Activated CD4-positive, alpha-beta T cell treated with anti-CD3 and anti-CD28 coated beads, Interleukin-2, amount 10 ng/mL, durations not matched to agents 24 days and 14 days (primary cell): ENCODE measurements at regions of chr20 and their contacts with region 1.

Region 1: GRCh38 chr20:2688041-2688591 is 4.5 kb upstream of the EBF4 start:
- DNase-seq: peak; percentile 95
- H3K4me3 Mint-ChIP-seq: peak overlapping the region; percentile 56
- H3K27ac Mint-ChIP-seq: peak overlapping the region; percentile 78
- H3K4me1 Mint-ChIP-seq: peaks cover 29% of the 10 kb centered on the region
- H3K27me3 Mint-ChIP-seq: peaks cover 32% of the 10 kb centered on the region

Region 2: GRCh38 chr20:2643708-2644107 is 44.4 kb before region 1 on chr20:
- intact Hi-C with region 1: no loop called
- DNase-seq: no peak
- H3K4me3 Mint-ChIP-seq: no peak overlapping the region
- H3K27ac Mint-ChIP-seq: no peak overlapping the region
- H3K4me1 Mint-ChIP-seq: peaks cover 3% of the 10 kb centered on the region
- H3K27me3 Mint-ChIP-seq: no peaks in the 10 kb centered on the region

Region 3: GRCh38 chr20:2742934-2743559 is 54.9 kb after region 1 on chr20:
- intact Hi-C with region 1: loop called (anchors 1 kb)
- DNase-seq: peak; percentile 92
- H3K4me3 Mint-ChIP-seq: peak overlapping the region; percentile 66
- H3K27ac Mint-ChIP-seq: peak overlapping the region; percentile 79
- H3K4me1 Mint-ChIP-seq: peaks cover 31% of the 10 kb centered on the region
- H3K27me3 Mint-ChIP-seq: peaks cover 19% of the 10 kb centered on the region

Region 4: GRCh38 chr20:2752567-2753460 is 64.7 kb after region 1 on chr20:
- intact Hi-C with region 1: loop called (anchors 1 kb)
- DNase-seq: peak; percentile 83
- H3K4me3 Mint-ChIP-seq: peak overlapping the region; percentile 79
- H3K27ac Mint-ChIP-seq: no peak overlapping the region
- H3K4me1 Mint-ChIP-seq: peaks cover 23% of the 10 kb centered on the region
- H3K27me3 Mint-ChIP-seq: peaks cover 52% of the 10 kb centered on the region

Region 5: DNA sequence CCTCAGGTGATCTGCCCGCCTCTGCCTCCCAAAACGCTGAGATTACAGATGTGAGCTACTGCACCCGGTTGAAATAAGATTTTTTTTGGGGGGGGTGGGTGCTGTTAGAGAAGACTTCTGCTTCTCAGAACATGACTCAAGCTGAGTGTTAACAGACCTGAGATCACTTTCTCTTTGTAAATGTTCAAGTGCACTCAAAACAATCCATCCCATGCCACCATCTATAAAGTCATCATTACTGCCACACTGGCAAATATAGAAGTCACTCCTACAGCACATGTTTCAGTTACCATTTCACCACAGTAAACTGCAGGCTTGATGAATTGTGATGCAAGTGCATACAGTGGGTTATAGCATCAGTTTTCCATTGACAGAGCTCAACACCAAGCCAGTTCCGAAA is 161.4 kb after region 1 on chr20:
- intact Hi-C with region 1: loop called (anchors 2 kb)
- DNase-seq: no peak
- H3K4me3 Mint-ChIP-seq: no peak overlapping the region
- H3K27ac Mint-ChIP-seq: no peak overlapping the region
- H3K4me1 Mint-ChIP-seq: peaks cover 24% of the 10 kb centered on the region
- H3K27me3 Mint-ChIP-seq: no peaks in the 10 kb centered on the region

Region 6: GRCh38 chr20:2984956-2985661 is 297.0 kb after region 1 on chr20:
- intact Hi-C with region 1: loop called (anchors 10 kb)
- DNase-seq: no peak
- H3K4me3 Mint-ChIP-seq: no peak overlapping the region
- H3K27ac Mint-ChIP-seq: no peak overlapping the region
- H3K4me1 Mint-ChIP-seq: peaks cover 37% of the 10 kb centered on the region
- H3K27me3 Mint-ChIP-seq: no peaks in the 10 kb centered on the region

Region 7: GRCh38 chr20:3000852-3001523 is 312.9 kb after region 1 on chr20:
- intact Hi-C with region 1: loop called (anchors 5 kb)
- DNase-seq: peak; percentile 75
- H3K4me3 Mint-ChIP-seq: no peak overlapping the region
- H3K27ac Mint-ChIP-seq: no peak overlapping the region
- H3K4me1 Mint-ChIP-seq: no peaks in the 10 kb centered on the region
- H3K27me3 Mint-ChIP-seq: no peaks in the 10 kb centered on the region